Naive thymus-derived CD4-positive, alpha-beta T cell (primary cell): ENCODE measurements at regions of chr7 and their contacts with region 1.

Region 1: GRCh38 chr7:135558337-135558767 is 635 bp downstream of the NUP205 start:
- DNase-seq: peak; percentile 36 to 71 (median 66)
- ATAC-seq: peak; percentile 78
- H3K4me3 ChIP-seq: peak overlapping the region; percentile 89
- H3K4me3 Mint-ChIP-seq: no peak overlapping the region
- H3K27ac ChIP-seq: peak overlapping the region; percentile 92
- H3K27ac Mint-ChIP-seq: no peak overlapping the region
- H3K4me1 ChIP-seq: peaks cover 6% of the 10 kb centered on the region in 2 donors
- H3K4me1 Mint-ChIP-seq: peaks cover 10 to 35% (median 25%) of the 10 kb centered on the region in 7 donors
- H3K27me3 ChIP-seq: no peaks in the 10 kb centered on the region
- H3K27me3 Mint-ChIP-seq: peaks cover 0 to 6% (median 0%) of the 10 kb centered on the region in 5 donors

Region 2: GRCh38 chr7:134458806-134459698 is 1099.3 kb before region 1 on chr7 and contains the start of gene AKR1B1:
- CTCF ChIA-PET with region 1: no interaction called
- POLR2A ChIA-PET with region 1: no interaction called
- intact Hi-C with region 1: loop called (anchors 2 kb)
- DNase-seq: peak; percentile 76 to 88 (median 84)
- ATAC-seq: peak; percentile 94
- H3K4me3 ChIP-seq: peak within 1 kb of the TSS; percentile 78
- H3K4me3 Mint-ChIP-seq: peak within 1 kb of the TSS; percentile 71 to 94 (median 89)
- H3K27ac ChIP-seq: peak within 1 kb of the TSS; percentile 72
- H3K27ac Mint-ChIP-seq: peak within 1 kb of the TSS; percentile 80 to 92 (median 84)
- H3K4me1 ChIP-seq: peaks cover 20 to 30% of the 10 kb centered on the region in 2 donors
- H3K4me1 Mint-ChIP-seq: peaks cover 30 to 55% (median 48%) of the 10 kb centered on the region in 7 donors
- H3K27me3 ChIP-seq: no peaks in the 10 kb centered on the region
- H3K27me3 Mint-ChIP-seq: no peaks in the 10 kb centered on the region
- total RNA-seq, gene AKR1B1: 62.2 to 108 (median 100) TPM

Region 3: GRCh38 chr7:134986363-134987251 is 571.7 kb before region 1 on chr7 and contains the start of gene AGBL3:
- CTCF ChIA-PET with region 1: no interaction called
- POLR2A ChIA-PET with region 1: no interaction called
- intact Hi-C with region 1: loop called in 1 of 2 experiments (anchors 1 kb)
- DNase-seq: peak; percentile 80 to 92 (median 89)
- ATAC-seq: peak; percentile 94
- H3K4me3 ChIP-seq: peak within 1 kb of the TSS; percentile 92
- H3K4me3 Mint-ChIP-seq: peak within 1 kb of the TSS; percentile 93 to 100 (median 98)
- H3K27ac ChIP-seq: peak within 1 kb of the TSS; percentile 96
- H3K27ac Mint-ChIP-seq: peak within 1 kb of the TSS; percentile 97 to 100 (median 99)
- H3K4me1 ChIP-seq: no peaks in the 10 kb centered on the region
- H3K4me1 Mint-ChIP-seq: peaks cover 20 to 61% (median 52%) of the 10 kb centered on the region in 7 donors
- H3K27me3 ChIP-seq: no peaks in the 10 kb centered on the region
- H3K27me3 Mint-ChIP-seq: no peaks in the 10 kb centered on the region
- total RNA-seq, gene AGBL3: 2.1 to 6.6 (median 3.8) TPM

Region 4: DNA sequence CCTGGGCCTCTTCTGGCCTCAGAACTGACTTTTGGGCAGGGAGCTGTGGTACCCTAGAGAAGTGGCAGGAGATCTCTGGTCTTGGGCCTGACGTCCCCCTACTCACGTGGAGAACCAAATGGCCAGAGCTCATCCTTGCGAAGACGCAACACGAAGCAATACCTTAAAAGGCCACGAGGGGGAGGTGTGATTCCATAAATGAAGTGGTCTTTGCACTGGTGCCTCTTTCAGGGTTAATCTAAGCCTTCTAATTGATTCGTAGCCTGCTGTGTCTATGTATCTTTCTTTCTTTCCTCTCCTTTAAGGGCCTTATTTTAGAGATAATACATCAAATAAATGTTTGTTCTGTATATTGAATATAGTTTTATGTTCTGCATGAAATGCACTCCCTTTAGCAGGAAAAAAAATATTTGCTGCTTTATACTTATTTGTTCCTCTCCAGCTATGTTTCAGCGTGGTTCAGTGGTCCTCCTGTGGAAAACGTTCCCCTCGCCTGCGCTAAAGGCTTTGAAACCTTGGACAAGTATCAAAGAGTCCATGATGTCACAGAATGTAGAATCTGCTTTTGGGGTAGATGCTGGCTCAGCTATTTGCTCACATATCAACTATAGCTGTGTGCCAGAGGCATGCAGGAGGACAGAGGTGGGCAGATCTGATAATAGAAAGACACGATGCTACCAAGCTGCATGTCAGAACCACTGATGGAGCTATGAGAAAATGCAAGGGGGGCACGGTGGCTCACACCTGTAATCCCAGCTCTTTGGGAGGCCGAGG is 283.7 kb before region 1 on chr7:
- CTCF ChIA-PET with region 1: no interaction called
- POLR2A ChIA-PET with region 1: no interaction called
- intact Hi-C with region 1: loop called in 1 of 2 experiments (anchors 1 kb)
- DNase-seq: peak; percentile 27 to 74 (median 55)
- ATAC-seq: peak; percentile 81
- H3K4me3 ChIP-seq: no peak overlapping the region
- H3K4me3 Mint-ChIP-seq: no peak overlapping the region
- H3K27ac ChIP-seq: no peak overlapping the region
- H3K27ac Mint-ChIP-seq: no peak overlapping the region
- H3K4me1 ChIP-seq: no peaks in the 10 kb centered on the region
- H3K4me1 Mint-ChIP-seq: peaks cover 0 to 4% (median 0%) of the 10 kb centered on the region in 7 donors
- H3K27me3 ChIP-seq: no peaks in the 10 kb centered on the region
- H3K27me3 Mint-ChIP-seq: peaks cover 0 to 8% (median 4%) of the 10 kb centered on the region in 5 donors

Region 5: DNA sequence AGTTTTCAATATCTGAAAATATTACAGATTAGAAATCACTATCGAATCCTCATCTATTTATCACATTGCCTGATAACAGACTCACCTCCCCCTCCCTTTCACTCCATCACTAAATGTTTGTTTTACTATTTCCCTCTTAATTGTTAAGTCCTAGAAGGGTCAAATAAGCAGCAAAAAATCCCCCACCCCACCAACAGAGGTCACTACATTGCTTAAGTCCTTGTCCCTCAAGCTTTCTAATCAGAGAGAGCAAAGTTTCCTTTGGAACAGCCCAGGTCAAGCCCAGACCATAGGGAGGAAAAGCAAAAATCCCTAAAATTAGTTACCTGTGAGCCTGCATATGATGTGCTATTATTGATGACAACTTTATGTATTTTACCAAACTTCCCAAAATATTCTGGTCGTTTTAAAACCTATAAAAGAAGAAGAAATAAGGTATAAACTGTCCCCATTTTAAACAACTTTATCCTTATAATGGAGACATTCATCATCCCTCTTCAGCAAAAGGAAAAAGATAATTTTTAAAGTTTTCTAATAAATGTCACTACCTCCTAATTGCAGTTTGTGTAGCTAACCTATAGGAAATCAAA is 143.4 kb before region 1 on chr7:
- CTCF ChIA-PET with region 1: no interaction called
- POLR2A ChIA-PET with region 1: no interaction called
- intact Hi-C with region 1: loop called in 1 of 2 experiments (anchors 1 kb)
- DNase-seq: peak in 4 of 9 donors; percentile 1 to 7 (median 5)
- ATAC-seq: peak; percentile 49
- H3K4me3 ChIP-seq: no peak overlapping the region
- H3K4me3 Mint-ChIP-seq: no peak overlapping the region
- H3K27ac ChIP-seq: no peak overlapping the region
- H3K27ac Mint-ChIP-seq: no peak overlapping the region
- H3K4me1 ChIP-seq: no peaks in the 10 kb centered on the region
- H3K4me1 Mint-ChIP-seq: peaks cover 0 to 19% (median 5%) of the 10 kb centered on the region in 7 donors
- H3K27me3 ChIP-seq: no peaks in the 10 kb centered on the region
- H3K27me3 Mint-ChIP-seq: no peaks in the 10 kb centered on the region

Region 6: DNA sequence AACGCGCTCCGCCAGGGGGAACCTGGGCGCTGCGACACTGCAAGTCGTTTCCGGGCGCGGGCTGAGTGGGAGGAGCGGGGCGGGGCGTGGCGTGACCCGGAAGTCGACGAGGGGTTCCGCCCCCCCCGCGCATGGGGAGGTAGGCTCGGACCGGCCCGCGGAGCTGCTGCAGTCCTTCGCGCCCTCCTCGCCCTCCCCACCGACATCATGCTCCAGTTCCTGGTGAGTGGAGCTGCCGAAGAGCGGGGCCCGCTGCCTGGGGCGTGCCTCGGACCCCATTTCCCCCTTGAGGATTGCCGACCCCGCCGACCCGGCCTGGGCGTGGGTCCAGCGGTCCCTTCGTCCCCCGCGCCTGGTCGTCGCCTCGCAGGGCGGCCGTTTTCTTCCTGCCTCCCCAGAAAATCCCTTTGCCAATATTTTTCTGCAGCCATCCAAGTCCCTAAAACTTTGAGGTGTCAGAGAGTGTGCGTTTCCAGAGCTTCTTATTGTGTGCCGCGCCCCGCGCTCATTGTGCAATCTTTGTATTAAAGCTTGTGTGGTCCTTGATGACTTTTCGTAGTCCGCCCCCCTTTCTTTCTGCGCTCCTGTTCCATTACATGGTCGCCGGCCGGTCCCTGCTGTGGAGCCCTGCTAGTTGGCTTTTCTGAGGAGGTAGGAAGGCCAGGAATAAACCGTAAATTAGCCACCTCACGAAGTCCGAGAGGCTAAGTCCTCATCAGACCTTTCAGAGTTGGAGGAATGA is 104.2 kb after region 1 on chr7 and contains the start of gene STMP1:
- CTCF ChIA-PET with region 1: no interaction called
- POLR2A ChIA-PET with region 1: no interaction called
- intact Hi-C with region 1: loop called (anchors 1 kb)
- DNase-seq: peak; percentile 89 to 97 (median 94)
- ATAC-seq: peak; percentile 99
- H3K4me3 ChIP-seq: peak within 1 kb of the TSS; percentile 91
- H3K4me3 Mint-ChIP-seq: peak within 1 kb of the TSS; percentile 86 to 98 (median 94)
- H3K27ac ChIP-seq: peak within 1 kb of the TSS; percentile 82
- H3K27ac Mint-ChIP-seq: peak within 1 kb of the TSS; percentile 80 to 95 (median 93)
- H3K4me1 ChIP-seq: peaks cover 6 to 15% of the 10 kb centered on the region in 2 donors
- H3K4me1 Mint-ChIP-seq: peaks cover 32 to 49% (median 43%) of the 10 kb centered on the region in 7 donors
- H3K27me3 ChIP-seq: no peaks in the 10 kb centered on the region
- H3K27me3 Mint-ChIP-seq: no peaks in the 10 kb centered on the region
- total RNA-seq, gene STMP1: 18.0 to 33.0 (median 24.7) TPM